Activated CD8-positive, alpha-beta memory T cell treated with anti-CD3 and anti-CD28 coated beads, Interleukin-2, amount 10 ng/mL, durations not matched to agents 7 days and 5 days (primary cell): ENCODE measurements at regions of chr17 and their contacts with region 1.

Region 1: DNA sequence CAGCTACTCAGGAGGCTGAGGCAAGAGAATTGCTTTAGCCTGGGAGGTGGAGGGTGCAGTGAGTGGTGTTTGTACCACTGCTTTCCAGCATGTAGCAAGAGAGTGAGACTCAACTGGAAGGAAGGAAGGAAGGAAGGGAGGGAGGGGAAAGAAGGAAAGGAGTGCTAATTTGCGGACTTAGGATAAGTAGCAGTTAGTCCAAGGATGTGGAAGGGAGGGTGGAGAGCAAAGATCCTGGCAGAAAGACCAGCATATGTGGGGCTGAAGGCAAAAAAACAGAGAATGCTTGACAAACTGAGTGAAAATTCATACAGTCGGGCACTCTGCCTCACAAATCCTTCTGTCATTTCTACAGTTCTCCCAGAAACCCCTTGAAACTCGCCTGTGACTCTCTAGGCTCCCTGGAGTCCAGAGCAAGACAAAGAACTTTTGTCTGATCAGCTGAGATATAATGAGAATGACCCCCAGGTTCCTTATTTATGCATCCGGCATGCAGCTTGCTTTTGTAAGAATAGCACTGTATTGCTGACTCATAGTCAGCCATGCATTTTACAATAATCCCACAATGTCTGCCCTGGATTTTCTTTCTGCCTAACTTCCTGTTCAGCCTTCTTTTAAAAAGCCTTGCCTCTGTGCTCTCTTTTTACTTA is 31.5 kb downstream of the CDK5RAP3 start:
- DNase-seq: no peak
- ATAC-seq: no peak
- H3K4me3 Mint-ChIP-seq: no peak overlapping the region
- H3K27ac Mint-ChIP-seq: no peak overlapping the region
- H3K4me1 Mint-ChIP-seq: peaks cover 36% of the 10 kb centered on the region
- H3K27me3 Mint-ChIP-seq: peaks cover 14% of the 10 kb centered on the region

Region 2: DNA sequence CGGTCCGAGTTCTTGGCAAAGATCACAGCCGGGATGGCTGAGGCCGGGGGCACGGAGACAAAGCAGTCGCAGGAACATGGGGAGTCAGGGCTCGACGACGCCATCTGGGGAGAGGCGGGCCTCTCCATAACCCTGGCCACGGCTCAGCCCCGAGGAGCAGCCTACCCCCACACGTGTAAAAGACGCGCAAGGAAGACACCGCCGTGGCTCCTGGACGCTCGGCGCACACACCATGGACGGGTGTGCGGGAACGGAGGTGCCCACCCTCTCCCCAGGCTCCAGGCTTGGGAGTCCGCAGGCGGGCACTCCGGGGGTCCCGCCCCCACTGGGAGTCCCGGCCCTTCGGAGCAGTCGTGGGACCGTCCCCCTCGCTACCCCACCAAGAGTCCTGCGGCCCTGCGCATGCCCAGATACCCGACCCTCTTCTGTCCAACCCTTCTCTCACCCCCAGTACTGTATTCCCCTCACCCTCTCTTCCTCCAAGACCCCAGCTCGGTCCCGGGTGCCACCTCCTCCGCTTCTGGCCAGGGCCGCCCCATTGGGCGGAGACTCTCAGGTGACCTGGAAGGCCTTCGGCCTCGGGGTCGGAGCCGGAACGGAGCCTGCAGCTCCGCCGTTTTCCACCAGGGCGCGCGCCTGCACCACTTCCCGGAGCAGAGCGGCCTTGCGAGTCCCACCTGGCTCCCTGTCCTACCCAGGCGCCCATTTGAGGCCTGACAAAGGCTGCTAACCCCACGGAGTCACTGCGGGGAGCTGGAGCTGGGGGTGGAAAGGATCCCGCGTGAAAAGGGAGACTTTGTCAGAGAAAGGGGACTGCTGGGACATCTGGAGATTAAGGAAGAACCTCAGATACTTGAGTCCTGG is 161.4 kb before region 1 on chr17 and contains the start of gene SCRN2:
- CTCF ChIA-PET with region 1: no interaction called
- DNase-seq: peak; percentile 93
- ATAC-seq: peak; percentile 94
- H3K4me3 Mint-ChIP-seq: peak within 1 kb of the TSS; percentile 96
- H3K27ac Mint-ChIP-seq: peak within 1 kb of the TSS; percentile 89
- H3K4me1 Mint-ChIP-seq: peaks cover 33% of the 10 kb centered on the region
- H3K27me3 Mint-ChIP-seq: peaks cover 20% of the 10 kb centered on the region
- total RNA-seq, gene SCRN2: 28.1 to 33.8 TPM

Region 3: GRCh38 chr17:47978324-47978723 is 24.1 kb before region 1 on chr17:
- CTCF ChIA-PET with region 1: interaction called, 14 read pairs
- DNase-seq: peak; percentile 76
- ATAC-seq: peak; percentile 83
- H3K4me3 Mint-ChIP-seq: no peak overlapping the region
- H3K27ac Mint-ChIP-seq: no peak overlapping the region
- H3K4me1 Mint-ChIP-seq: peaks cover 30% of the 10 kb centered on the region
- H3K27me3 Mint-ChIP-seq: no peaks in the 10 kb centered on the region